Heart left ventricle (tissue), 16 donors: ENCODE measurements at regions of chr16 and their contacts with region 1.

Region 1: DNA sequence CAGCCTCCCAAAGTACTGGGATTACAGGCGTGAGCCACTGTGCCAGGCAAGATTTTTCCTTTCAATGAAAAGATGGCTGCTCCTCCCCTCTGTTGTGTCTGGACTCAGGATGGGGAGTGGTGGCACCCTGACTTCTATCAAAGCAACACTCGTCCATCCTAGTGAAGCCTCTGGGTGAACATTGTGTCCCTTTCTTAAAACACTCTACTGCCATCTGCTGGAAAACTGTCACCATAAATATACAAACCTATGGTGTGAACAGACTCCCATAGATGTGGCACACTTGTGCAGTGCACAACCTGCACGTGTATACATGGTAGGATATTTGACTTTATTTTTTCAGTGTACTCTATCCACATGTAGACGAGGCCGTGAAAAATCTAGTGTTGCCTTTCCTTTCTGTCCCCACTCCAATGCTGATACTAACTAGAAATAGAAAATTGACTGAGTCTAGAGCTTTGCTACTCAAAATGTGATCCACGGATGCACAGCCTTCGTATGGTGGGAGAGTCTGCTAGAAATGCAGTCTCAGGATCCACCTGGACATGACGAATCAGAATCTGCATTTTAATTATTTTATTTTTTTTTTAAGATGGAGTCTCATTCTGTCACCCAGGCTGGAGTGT is 55.9 kb upstream of the PLCG2 start:
- DNase-seq: peak in 2 of 5 donors; percentile 34 to 51
- ATAC-seq: peak; percentile 91 to 97 (median 94)
- H3K4me3 ChIP-seq: no peak overlapping the region
- H3K27ac ChIP-seq: no peak overlapping the region
- H3K4me1 ChIP-seq: peaks cover 0 to 8% (median 0%) of the 10 kb centered on the region in 12 donors
- H3K27me3 ChIP-seq: peaks cover 0 to 8% (median 0%) of the 10 kb centered on the region in 9 donors
- CTCF ChIP-seq: peak; percentile 60 to 87 (median 75)
- POLR2A ChIP-seq: no peak

Region 2: DNA sequence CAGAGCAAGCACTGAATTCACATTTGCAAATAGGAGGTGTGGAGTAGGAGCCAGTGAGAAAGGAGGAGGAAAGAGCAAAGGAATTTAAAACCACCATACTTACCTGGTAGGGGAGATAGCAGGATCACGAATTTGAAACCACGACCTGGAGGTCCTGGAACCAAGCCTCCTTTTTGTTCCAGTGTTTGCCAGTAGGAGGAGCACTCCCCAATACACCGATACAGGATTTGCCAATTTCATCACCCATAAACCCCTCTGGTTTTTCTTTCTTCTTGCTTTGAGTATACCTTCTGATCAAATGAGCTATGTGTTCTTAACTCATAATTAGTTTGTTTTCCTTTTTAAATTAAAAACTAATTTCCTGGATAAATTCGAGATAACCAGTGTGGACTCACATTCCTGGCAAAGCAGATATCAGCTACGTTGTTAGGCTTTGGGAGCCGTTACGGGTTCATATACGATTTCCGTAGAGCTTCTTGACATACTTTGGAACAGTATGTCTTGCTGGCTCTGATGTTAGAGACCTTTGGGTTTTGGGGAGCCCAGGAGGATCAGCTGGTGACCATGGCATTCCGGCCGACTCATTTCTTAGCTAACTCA is 462.1 kb before region 1 on chr16:
- intact Hi-C with region 1: loop called in 1 of 10 experiments (anchors 5 kb)
- DNase-seq: no peak
- ATAC-seq: no peak
- H3K4me3 ChIP-seq: no peak overlapping the region
- H3K27ac ChIP-seq: no peak overlapping the region
- H3K4me1 ChIP-seq: peaks cover 0 to 17% (median 2%) of the 10 kb centered on the region in 12 donors
- H3K27me3 ChIP-seq: no peaks in the 10 kb centered on the region
- CTCF ChIP-seq: peak; percentile 34 to 66 (median 54)
- POLR2A ChIP-seq: no peak

Region 3: DNA sequence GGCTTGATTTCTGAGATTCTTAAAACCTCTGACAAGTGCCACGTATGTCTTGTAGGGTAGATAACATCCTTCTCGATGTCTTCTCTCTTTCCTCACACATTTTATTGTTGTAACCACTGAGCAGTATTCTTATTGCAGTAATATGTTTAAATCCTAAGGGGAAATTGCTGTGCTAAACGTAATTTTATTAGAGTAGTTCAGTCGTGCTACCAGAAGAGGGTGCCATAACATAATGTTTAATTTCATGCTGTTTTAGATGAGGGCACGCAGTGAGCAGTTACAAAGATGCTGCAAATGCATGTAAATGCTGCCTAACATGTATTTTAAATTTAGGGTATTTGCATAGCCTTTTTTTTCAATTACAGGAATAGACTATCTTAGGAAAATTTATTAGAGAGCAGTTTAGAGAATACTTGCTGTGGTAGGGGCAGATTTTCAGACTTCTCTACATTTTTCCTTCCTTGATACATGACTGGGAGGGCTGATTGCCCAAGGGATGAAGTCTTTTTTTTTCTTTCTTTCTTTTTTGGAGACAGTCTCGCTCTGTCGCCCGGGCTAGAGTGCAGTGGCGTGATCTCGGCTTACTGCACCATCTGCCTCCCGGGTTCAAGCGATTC is 356.8 kb before region 1 on chr16:
- intact Hi-C with region 1: loop called (anchors 1 to 10 kb)
- DNase-seq: no peak
- ATAC-seq: peak in 3 of 4 donors; percentile 60 to 74 (median 61)
- H3K4me3 ChIP-seq: no peak overlapping the region
- H3K27ac ChIP-seq: no peak overlapping the region
- H3K4me1 ChIP-seq: peaks cover 0 to 25% (median 6%) of the 10 kb centered on the region in 12 donors
- H3K27me3 ChIP-seq: no peaks in the 10 kb centered on the region
- CTCF ChIP-seq: peak; percentile 49 to 76 (median 62)
- POLR2A ChIP-seq: no peak

Region 4: GRCh38 chr16:81623363-81624102 is 99.7 kb before region 1 on chr16:
- intact Hi-C with region 1: loop called (anchors 1 to 5 kb)
- DNase-seq: peak in 1 of 5 donors; percentile 29
- ATAC-seq: no peak
- H3K4me3 ChIP-seq: no peak overlapping the region
- H3K27ac ChIP-seq: no peak overlapping the region
- H3K4me1 ChIP-seq: peaks cover 0 to 18% (median 13%) of the 10 kb centered on the region in 12 donors
- H3K27me3 ChIP-seq: no peaks in the 10 kb centered on the region
- CTCF ChIP-seq: peak; percentile 39 to 67 (median 55)
- POLR2A ChIP-seq: no peak